Sciatic nerve (tissue), 2 donors: ENCODE measurements at regions of chr15 and their contacts with region 1.

Region 1: GRCh38 chr15:53360881-53361280 is 398.6 kb downstream of the WDR72 start:
- DNase-seq: no peak
- ATAC-seq: no peak

Region 2: DNA sequence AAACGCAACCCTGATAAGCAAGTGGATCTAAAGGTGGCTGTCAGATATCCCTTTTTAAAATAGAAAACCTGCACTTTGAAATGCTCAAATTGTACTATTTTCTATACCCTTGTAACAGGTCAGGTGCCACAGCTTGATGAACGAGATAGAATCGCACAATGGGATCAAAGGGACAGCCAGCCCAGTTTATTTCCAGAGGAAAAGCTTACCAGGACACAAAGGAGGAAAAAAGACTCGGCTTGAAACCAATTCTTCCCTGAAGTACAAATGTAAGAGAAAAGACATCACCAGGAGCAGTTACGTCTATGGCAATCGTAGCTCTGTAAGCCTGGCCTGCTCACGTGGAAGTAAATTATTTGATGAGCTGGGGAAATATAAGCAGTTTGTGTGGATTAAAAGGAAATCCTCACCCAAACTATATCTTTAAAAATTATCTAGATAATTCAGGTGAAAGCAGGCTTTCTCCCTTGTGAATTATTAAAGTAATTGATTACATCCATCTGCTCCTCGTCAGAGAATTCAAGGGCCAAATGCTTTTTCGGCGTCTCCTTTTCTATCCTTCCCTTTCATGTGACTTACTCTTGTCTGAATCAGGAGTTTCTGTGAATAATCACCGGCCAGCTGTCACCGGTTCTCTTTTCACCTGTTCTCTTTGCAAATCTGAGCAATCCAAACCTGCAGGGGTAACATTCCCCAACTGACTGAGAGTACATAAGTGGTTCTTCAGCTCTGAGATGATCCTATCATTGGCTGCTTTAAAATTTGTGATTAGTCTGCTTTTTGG is 231.6 kb before region 1 on chr15:
- intact Hi-C with region 1: no loop called
- DNase-seq: no peak
- ATAC-seq: no peak

Region 3: GRCh38 chr15:53401503-53401902 is 40.6 kb after region 1 on chr15:
- intact Hi-C with region 1: loop called (anchors 1 kb)
- DNase-seq: no peak
- ATAC-seq: no peak